ENCODE measurements at regions of chr7 and their contacts with region 1.

Region 1: GRCh38 chr7:31782411-31782991 is 95.5 kb downstream of the PPP1R17 start:
- DNase-seq: peak in 1 of 6 donors; percentile 20
- ATAC-seq: peak; percentile 48 to 88 (median 82)
- H3K4me3 ChIP-seq: no peak overlapping the region
- H3K27ac ChIP-seq: no peak overlapping the region
- H3K4me1 ChIP-seq: no peaks in the 10 kb centered on the region
- H3K27me3 ChIP-seq: no peaks in the 10 kb centered on the region
- CTCF ChIP-seq: peak; percentile 61 to 79 (median 66)

Region 2: GRCh38 chr7:31595390-31595789 is 187.1 kb before region 1 on chr7:
- intact Hi-C with region 1: no loop called
- DNase-seq: no peak
- ATAC-seq: no peak
- H3K4me3 ChIP-seq: no peak overlapping the region
- H3K27ac ChIP-seq: no peak overlapping the region
- H3K4me1 ChIP-seq: no peaks in the 10 kb centered on the region
- H3K27me3 ChIP-seq: no peaks in the 10 kb centered on the region
- CTCF ChIP-seq: no peak

Region 3: GRCh38 chr7:31835471-31835870 is 53.0 kb after region 1 on chr7:
- intact Hi-C with region 1: no loop called
- DNase-seq: no peak
- ATAC-seq: no peak
- H3K4me3 ChIP-seq: no peak overlapping the region
- H3K27ac ChIP-seq: no peak overlapping the region
- H3K4me1 ChIP-seq: no peaks in the 10 kb centered on the region
- H3K27me3 ChIP-seq: no peaks in the 10 kb centered on the region
- CTCF ChIP-seq: no peak

Region 4: DNA sequence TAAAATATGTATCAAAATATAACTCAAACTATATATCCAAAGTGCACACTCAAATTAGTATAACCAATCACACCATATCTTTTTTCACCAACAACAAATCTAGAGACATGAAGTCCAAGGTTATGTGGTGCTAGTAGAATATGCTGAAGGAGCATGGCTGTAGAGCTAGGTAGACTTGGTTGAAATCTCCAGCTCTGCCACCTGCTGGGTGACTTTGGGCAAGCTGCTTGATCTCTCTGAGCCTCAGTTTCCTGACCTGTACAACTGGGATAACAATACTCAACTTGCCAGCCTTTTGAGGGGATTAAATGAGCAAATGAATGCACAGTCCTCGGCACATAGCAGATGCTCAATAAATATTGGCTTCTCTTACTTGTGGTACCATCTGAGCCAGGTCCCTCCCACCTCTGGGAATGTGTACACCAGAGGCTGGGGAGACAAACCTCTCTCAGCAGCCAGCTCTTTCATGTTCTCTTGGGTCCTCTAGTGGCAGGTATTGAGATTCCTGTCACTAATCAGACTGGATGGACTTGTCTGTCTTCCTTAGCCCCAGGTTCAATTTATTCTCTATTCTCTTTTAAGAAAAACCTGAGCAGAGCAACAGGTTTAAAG is 382.0 kb after region 1 on chr7:
- intact Hi-C with region 1: loop called in 1 of 3 experiments (anchors 10 kb)
- DNase-seq: peak in 1 of 6 donors; percentile 5
- ATAC-seq: peak in 3 of 4 donors; percentile 64 to 83 (median 78)
- H3K4me3 ChIP-seq: no peak overlapping the region
- H3K27ac ChIP-seq: no peak overlapping the region
- H3K4me1 ChIP-seq: no peaks in the 10 kb centered on the region
- H3K27me3 ChIP-seq: no peaks in the 10 kb centered on the region
- CTCF ChIP-seq: peak in 1 of 4 donors; percentile 19

Measured in pancreas (tissue), 10 donors.